ENCODE measurements at regions of chr9 and their contacts with region 1.

Region 1: DNA sequence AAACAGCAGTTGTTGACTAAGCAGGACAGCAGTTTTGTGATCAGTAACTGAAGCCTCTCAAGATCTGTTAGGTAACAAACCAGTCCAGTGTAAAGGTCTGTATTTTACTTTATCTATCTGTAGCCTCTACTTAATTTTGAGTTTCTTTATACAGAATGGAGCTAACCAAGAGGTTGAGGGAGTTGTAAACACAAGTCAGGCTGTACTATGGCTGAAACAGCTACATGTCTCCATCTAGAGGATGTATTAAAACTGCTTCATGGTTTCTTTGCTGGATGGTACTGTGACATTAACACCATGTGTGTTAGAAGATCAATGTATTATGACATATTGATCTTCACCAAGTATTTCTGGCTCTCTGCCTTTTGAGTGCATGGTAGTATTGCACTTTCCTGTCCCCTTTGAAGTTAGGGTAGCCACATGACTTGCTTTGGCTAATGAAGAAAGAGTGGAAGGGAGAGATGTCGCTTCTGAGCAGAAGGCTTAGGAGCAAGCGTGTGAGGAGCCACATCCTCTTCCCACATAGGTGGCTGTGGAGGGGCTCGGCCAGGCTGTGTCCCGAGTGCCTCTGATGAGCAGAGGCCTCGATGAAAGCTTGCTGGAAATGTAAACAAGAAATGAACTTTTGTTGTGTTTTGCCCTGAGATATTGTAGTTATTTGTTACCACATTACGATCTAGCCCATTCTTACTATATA is 105.6 kb upstream of the PCA3 start:
- DNase-seq: peak; percentile 25
- H3K4me3 ChIP-seq: no peak overlapping the region
- H3K27ac ChIP-seq: no peak overlapping the region
- H3K4me1 ChIP-seq: peaks cover 9% of the 10 kb centered on the region
- H3K27me3 ChIP-seq: peaks cover 4% of the 10 kb centered on the region
- CTCF ChIP-seq: peak; percentile 57

Region 2: GRCh38 chr9:76445976-76446375 is 212.7 kb before region 1 on chr9:
- CTCF ChIA-PET with region 1: no interaction called
- POLR2A ChIA-PET with region 1: no interaction called
- intact Hi-C with region 1: loop called (anchors 5 kb)
- DNase-seq: no peak
- H3K4me3 ChIP-seq: no peak overlapping the region
- H3K27ac ChIP-seq: no peak overlapping the region
- H3K4me1 ChIP-seq: no peaks in the 10 kb centered on the region
- H3K27me3 ChIP-seq: no peaks in the 10 kb centered on the region
- CTCF ChIP-seq: no peak

Region 3: DNA sequence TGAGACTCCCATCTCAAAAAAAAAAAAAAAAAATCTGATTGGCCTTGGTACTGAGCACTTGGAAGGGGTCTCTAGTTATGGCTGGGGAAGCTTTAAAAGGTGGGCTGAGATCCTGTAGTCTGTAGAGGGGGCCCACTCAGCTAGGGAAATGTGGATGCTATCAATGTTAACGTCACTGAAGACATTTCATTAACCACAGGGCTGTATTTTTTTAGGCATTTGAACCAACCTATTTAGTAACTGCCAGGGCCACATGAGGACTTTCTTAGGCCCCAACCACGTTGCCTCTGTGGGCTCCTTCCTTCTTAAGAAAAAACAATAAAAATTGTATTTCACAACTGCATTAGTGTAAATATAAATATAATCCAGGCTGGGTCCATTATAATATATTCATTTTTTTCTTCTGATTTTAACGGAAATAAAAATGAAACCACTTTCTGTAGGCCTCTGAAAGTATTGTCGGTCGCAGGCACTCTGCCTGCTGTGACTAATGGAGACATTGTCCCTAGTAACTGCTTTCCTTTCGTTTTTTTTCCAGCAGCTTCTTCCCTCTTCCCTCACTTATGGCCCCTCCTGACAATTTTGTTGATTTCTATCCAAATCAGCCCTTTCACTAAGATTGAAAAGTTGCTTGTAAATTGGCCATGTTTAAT is 128.1 kb before region 1 on chr9:
- CTCF ChIA-PET with region 1: no interaction called
- POLR2A ChIA-PET with region 1: no interaction called
- intact Hi-C with region 1: no loop called
- DNase-seq: no peak
- H3K4me3 ChIP-seq: no peak overlapping the region
- H3K27ac ChIP-seq: no peak overlapping the region
- H3K4me1 ChIP-seq: no peaks in the 10 kb centered on the region
- H3K27me3 ChIP-seq: no peaks in the 10 kb centered on the region
- CTCF ChIP-seq: no peak